Prostate gland (tissue), 2 donors: ENCODE measurements at regions of chr12 and their contacts with region 1.

Region 1: GRCh38 chr12:54359033-54359761 is 5.1 kb downstream of the GPR84 start:
- DNase-seq: peak; percentile 96
- H3K4me3 ChIP-seq: peak overlapping the region; percentile 40 to 53
- H3K27ac ChIP-seq: peak overlapping the region; percentile 78 to 88
- H3K4me1 ChIP-seq: no peaks in the 10 kb centered on the region
- H3K27me3 ChIP-seq: no peaks in the 10 kb centered on the region
- CTCF ChIP-seq: peak in 2 of 4 experiments; percentile 3 to 9
- POLR2A ChIP-seq: peak; percentile 32

Region 2: DNA sequence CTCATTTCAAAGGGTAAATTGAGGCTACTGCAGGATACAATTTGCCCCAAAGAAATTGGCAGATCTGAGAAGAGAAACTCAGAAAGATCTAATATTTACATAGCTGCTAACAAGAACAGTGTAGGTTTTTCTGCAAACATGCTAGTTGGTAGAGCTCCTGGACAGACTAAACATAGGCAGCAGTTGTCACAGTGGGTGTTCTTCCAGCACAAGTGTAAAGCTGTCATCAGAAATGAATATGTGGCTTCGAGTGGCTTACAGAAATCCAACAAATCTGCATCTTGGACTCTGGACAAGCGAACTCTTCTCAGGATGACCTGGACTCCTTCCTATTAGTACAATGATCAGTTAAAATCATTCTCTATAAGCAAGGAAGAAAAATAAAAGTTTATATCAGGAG is 85.2 kb before region 1 on chr12:
- intact Hi-C with region 1: no loop called
- DNase-seq: peak; percentile 23
- H3K4me3 ChIP-seq: no peak overlapping the region
- H3K27ac ChIP-seq: peak overlapping the region; percentile 54 to 65
- H3K4me1 ChIP-seq: peaks cover 3% of the 10 kb centered on the region
- H3K27me3 ChIP-seq: no peaks in the 10 kb centered on the region
- CTCF ChIP-seq: no peak
- POLR2A ChIP-seq: no peak

Region 3: DNA sequence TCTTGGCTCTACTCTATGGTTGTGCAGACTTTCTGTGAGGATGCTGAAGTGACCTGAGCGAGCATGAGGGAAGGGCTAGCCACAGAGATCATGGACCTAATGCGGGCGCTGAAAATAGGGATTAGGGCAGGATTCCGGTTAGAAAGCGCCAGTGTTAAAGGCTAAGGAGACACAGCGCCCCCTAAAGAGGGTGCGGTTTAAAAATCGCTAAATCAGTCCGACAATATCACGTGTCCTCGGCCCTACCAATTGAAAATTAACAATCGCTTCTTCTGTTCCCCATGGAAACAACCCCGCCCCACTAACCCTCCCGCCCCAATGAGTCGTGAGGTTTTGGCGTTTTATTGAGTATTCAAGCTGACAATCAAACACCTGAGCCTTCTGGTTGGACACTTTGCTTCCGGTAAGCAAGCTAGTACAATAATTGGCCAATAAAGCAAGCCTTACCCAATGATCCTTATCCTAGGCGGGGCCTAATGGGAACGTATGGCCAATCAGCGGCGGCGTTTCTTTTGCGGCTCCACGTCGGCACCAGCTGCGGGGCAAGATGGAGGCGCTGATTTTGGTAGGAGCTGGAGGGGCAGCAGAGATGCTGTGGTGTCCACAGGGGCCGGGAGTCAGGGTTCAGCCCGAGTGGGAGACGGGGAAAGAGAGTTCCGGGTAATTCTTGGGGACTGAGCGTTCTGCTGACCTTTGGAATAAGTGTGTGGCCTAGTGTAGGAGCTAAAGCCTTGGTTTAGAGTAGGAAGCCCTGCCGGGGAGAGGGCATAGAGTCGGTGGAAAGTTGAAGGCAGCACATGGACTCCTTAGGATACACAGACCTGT is 34.4 kb before region 1 on chr12 and contains the start of gene COPZ1:
- intact Hi-C with region 1: loop called (anchors 5 kb)
- DNase-seq: peak; percentile 97
- H3K4me3 ChIP-seq: peak within 1 kb of the TSS; percentile 70 to 72
- H3K27ac ChIP-seq: peak within 1 kb of the TSS; percentile 83 to 88
- H3K4me1 ChIP-seq: no peaks in the 10 kb centered on the region
- H3K27me3 ChIP-seq: no peaks in the 10 kb centered on the region
- CTCF ChIP-seq: peak; percentile 58 to 81 (median 71)
- POLR2A ChIP-seq: peak; percentile 80
- total RNA-seq, gene COPZ1: 83.1 to 192 TPM

Region 4: DNA sequence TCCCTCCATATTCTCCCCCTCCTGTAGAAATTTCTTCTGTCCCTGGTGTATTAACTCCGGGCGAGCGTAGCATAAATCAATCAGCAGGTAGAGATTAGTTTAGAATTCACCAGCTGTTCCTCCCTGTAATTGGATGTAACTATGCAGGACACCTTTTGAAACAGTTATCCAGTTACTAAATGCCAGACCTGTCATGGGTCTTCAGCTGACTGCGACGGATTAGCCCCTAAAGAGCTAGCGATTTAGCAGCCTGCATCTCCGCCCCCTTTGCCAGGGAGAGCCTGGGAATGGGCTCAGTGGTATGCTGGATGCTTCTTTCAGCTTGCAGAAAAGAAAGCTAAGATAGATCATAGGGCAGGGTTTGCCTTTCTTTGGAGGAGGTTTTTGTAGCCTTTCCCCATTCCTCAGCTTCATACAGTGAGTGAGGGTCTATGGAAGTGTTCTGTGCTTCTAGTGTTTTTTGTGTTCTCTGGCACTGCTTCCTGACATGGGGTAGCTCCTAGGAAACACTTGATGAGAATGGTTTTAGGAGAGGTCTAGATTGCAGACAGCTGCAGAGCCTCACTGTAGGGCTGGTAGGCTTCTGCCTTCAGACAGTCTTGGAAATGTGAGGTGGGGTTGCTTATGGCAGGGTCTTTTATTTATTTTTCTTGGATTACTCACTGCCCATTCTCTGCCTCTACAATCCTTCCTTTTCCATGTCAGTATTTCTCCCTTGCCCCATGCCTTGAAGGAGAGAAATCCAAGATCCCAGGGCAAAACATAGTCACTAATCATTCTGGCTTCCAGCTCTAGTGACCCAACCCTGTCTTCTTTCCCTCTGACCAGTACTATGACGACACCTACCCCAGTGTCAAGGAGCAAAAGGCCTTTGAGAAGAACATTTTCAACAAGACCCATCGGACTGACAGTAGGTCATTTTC is 17.6 kb before region 1 on chr12:
- intact Hi-C with region 1: loop called (anchors 2 kb)
- DNase-seq: no peak
- H3K4me3 ChIP-seq: no peak overlapping the region
- H3K27ac ChIP-seq: no peak overlapping the region
- H3K4me1 ChIP-seq: no peaks in the 10 kb centered on the region
- H3K27me3 ChIP-seq: no peaks in the 10 kb centered on the region
- CTCF ChIP-seq: no peak
- POLR2A ChIP-seq: no peak

Region 5: DNA sequence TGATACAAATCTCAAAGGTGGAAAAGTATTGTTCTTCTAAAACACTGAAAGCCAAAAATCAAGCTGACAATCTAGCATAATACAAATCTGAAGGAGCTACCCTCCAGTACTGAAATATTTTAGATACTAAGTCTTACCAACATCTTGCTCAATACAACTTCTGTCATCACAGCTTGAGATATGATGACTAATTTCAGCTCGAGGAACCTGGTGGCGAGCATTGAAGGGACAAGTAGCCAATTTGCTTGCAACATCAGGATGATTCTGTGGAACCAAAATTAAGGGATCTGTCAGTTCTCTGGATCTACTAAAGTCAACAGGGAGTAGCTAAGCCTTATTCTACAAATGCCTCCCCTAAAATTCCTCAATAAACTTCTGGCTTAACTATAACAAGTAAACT is 103.8 kb after region 1 on chr12:
- intact Hi-C with region 1: no loop called
- DNase-seq: no peak
- H3K4me3 ChIP-seq: no peak overlapping the region
- H3K27ac ChIP-seq: no peak overlapping the region
- H3K4me1 ChIP-seq: no peaks in the 10 kb centered on the region
- H3K27me3 ChIP-seq: no peaks in the 10 kb centered on the region
- CTCF ChIP-seq: no peak
- POLR2A ChIP-seq: no peak